K562 (cell line): ENCODE measurements at regions of chr6 and their contacts with region 1.

Region 1: DNA sequence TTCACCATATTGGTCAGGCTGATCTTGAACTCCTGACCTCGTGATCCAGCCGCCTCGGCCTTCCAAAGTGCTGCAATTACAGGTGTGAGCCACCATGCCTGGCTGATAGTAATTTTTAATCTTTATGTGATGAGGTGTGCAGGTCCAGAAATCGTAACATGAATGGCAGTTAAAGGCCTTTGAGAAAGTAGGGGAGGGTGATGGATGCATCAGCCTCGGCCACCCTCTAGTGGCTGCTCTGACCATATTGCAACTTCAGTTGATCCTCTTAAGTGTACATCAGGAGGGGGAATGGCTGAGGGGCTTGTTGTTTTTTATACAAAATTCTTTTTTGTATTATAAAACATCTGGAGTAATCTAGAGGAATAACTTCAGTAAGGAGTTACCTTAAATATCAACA is 193.0 kb downstream of the ZFAND3 start:
- DNase-seq: peak; percentile 39 to 57 (median 44)
- ATAC-seq: peak; percentile 92
- H3K4me3 ChIP-seq: no peak overlapping the region
- H3K27ac ChIP-seq: no peak overlapping the region
- H3K4me1 ChIP-seq: no peaks in the 10 kb centered on the region; a peak in 1 of 5 replicates
- H3K27me3 ChIP-seq: no peaks in the 10 kb centered on the region
- CTCF ChIP-seq: peak; percentile 69 to 83 (median 73)
- EP300 ChIP-seq: no peak
- POLR2A ChIP-seq: no peak
- RAD21 ChIP-seq: peak; percentile 48 to 80

Region 2: GRCh38 chr6:37705239-37706051 is 307.1 kb before region 1 on chr6:
- CTCF ChIA-PET with region 1: no interaction called
- POLR2A ChIA-PET with region 1: no interaction called
- in situ Hi-C with region 1: no loop called
- intact Hi-C with region 1: loop called (anchors 5 kb)
- DNase-seq: peak; percentile 87 to 90 (median 88)
- ATAC-seq: peak; percentile 91
- H3K4me3 ChIP-seq: peak overlapping the region; percentile 36
- H3K27ac ChIP-seq: no peak overlapping the region
- H3K4me1 ChIP-seq: peaks cover 8 to 16% of the 10 kb centered on the region in 2 experiments; a peak in 4 of 5 replicates
- H3K27me3 ChIP-seq: peaks cover 4 to 12% of the 10 kb centered on the region in 2 experiments; a peak in 3 of 5 replicates
- CTCF ChIP-seq: peak; percentile 70 to 79 (median 76)
- EP300 ChIP-seq: no peak; the same call in 1 of the 2 replicates
- POLR2A ChIP-seq: no peak
- RAD21 ChIP-seq: peak; percentile 60 to 80

Region 3: GRCh38 chr6:37791156-37791919 is 221.2 kb before region 1 on chr6:
- CTCF ChIA-PET with region 1: interaction called, 5 read pairs
- POLR2A ChIA-PET with region 1: no interaction called
- in situ Hi-C with region 1: loop called (anchors 10 kb)
- intact Hi-C with region 1: loop called (anchors 1 kb)
- DNase-seq: peak; percentile 95 to 98 (median 97)
- ATAC-seq: peak; percentile 100
- H3K4me3 ChIP-seq: no peak overlapping the region
- H3K27ac ChIP-seq: no peak overlapping the region
- H3K4me1 ChIP-seq: peaks cover 9 to 10% of the 10 kb centered on the region in 2 experiments; a peak in 4 of 5 replicates
- H3K27me3 ChIP-seq: peaks cover 6 to 17% of the 10 kb centered on the region in 2 experiments; a peak in 3 of 5 replicates
- CTCF ChIP-seq: peak; percentile 95 to 99 (median 95)
- EP300 ChIP-seq: peak; percentile 79
- POLR2A ChIP-seq: no peak
- RAD21 ChIP-seq: peak; percentile 96 to 98

Region 4: DNA sequence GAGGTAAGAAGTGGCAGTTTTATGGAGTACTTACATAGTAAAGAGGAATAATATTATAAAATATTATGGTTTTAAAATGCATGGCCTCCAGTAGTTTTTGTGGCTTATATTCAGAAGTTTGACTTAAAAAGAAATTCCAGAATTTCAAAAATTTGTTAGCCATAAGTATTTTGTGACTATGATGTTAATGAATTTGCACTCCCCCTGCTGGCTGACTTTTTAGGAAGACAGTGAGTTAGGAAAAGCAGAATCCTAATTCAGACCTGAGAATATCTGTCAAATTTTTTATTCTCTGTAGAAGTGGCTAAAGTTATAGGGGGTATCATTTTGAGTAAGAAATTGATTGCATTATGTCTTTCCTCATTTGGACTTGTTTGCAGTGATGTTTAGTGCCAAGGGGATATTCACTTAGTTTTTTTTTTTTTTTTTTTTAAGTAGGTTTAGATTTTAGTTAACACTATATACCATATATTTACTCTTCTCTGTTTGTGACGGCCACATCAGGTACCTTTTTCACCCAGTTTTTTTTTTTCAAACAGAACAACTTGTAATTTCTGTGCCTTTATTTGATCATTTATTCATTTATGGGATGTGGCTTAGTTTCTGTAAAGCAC is 152.2 kb before region 1 on chr6:
- CTCF ChIA-PET with region 1: no interaction called
- POLR2A ChIA-PET with region 1: no interaction called
- in situ Hi-C with region 1: no loop called
- intact Hi-C with region 1: loop called (anchors 10 kb)
- DNase-seq: peak in 3 of 4 experiments; percentile 22 to 57 (median 28)
- ATAC-seq: peak; percentile 79
- H3K4me3 ChIP-seq: no peak overlapping the region
- H3K27ac ChIP-seq: no peak overlapping the region
- H3K4me1 ChIP-seq: no peaks in the 10 kb centered on the region
- H3K27me3 ChIP-seq: no peaks in the 10 kb centered on the region
- CTCF ChIP-seq: peak; percentile 34 to 67 (median 53); a peak in 3 of 6 replicates
- EP300 ChIP-seq: no peak
- POLR2A ChIP-seq: no peak
- RAD21 ChIP-seq: peak; percentile 36 to 62; a peak in 3 of 4 replicates

Region 5: DNA sequence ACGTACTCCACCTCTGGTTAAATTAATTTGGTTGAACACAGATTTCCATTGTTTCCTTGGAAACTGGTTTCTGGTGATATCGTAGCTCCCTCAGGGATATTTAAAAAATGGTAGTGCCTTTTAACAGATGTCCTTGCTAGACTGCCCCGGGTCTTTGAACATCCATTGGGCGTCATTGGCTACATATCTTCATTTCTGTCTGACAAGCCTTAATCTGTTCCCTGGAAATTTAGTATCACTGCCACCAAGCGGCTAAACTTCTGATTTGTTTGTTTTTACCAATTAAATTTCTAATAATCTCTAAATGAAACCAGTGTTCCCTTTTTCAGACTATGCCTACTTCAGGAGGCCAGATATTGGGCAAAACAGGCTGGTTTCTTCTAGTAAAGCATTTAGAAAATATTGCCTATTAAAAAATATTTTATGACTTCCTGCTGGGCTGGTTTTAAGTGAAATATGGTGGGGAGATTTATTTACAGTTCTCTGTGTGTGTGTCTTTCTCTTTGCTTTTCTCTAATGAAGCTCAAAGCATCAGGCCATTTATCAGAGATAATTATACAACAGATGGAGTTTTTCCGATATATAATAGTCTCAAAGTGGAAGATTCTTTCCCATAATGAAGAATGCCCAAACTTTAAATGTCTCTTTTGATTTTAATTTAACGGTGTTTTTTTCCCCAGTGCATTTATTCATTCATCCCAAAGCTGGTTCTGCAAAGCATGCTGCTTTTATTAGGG is 56.4 kb after region 1 on chr6:
- CTCF ChIA-PET with region 1: no interaction called
- POLR2A ChIA-PET with region 1: no interaction called
- in situ Hi-C with region 1: no loop called
- intact Hi-C with region 1: no loop called
- DNase-seq: no peak
- ATAC-seq: no peak
- H3K4me3 ChIP-seq: no peak overlapping the region
- H3K27ac ChIP-seq: no peak overlapping the region
- H3K4me1 ChIP-seq: no peaks in the 10 kb centered on the region
- H3K27me3 ChIP-seq: no peaks in the 10 kb centered on the region
- CTCF ChIP-seq: peak in 1 of 3 experiments; percentile 10; a peak in 1 of 6 replicates
- EP300 ChIP-seq: no peak
- POLR2A ChIP-seq: no peak
- RAD21 ChIP-seq: no peak